CD14-positive monocyte (primary cell): ENCODE measurements at regions of chr2 and their contacts with region 1.

Region 1: GRCh38 chr2:102301867-102302362 is 9.4 kb upstream of the IL1RL1 start:
- DNase-seq: peak in 2 of 3 donors; percentile 66 to 73
- H3K4me3 ChIP-seq: no peak overlapping the region
- H3K4me3 Mint-ChIP-seq: peak overlapping the region in 1 of 2 donors; percentile 85
- H3K27ac ChIP-seq: no peak overlapping the region
- H3K27ac Mint-ChIP-seq: peak overlapping the region in 1 of 7 donors; percentile 0
- H3K4me1 ChIP-seq: peaks cover 3 to 4% of the 10 kb centered on the region in 2 donors
- H3K4me1 Mint-ChIP-seq: peaks cover 15% of the 10 kb centered on the region
- H3K27me3 ChIP-seq: peaks cover 82 to 95% of the 10 kb centered on the region in 2 donors
- H3K27me3 Mint-ChIP-seq: peaks cover 68 to 82% (median 82%) of the 10 kb centered on the region in 3 donors
- CTCF ChIP-seq: peak; percentile 71

Region 2: DNA sequence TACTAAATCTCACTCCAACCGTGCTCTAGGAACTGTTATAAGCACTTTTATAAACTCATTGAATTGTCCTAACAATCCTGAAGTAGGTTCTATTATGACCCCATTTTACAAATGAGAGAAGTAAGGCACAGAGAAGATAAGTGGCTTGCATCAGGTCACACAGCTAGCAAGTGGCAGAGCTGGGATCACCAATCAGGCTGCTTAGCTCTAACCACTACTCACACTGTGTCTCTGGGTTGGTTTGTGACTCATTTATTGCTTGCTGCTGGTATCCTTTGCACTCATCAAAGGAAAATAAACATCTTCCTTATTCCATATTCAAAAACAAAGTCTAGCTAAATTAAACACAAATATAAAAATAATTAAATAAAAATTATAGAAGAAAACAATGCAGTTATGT is 352.6 kb before region 1 on chr2:
- intact Hi-C with region 1: no loop called
- DNase-seq: peak in 2 of 3 donors; percentile 46 to 56
- H3K4me3 ChIP-seq: no peak overlapping the region
- H3K4me3 Mint-ChIP-seq: no peak overlapping the region
- H3K27ac ChIP-seq: no peak overlapping the region
- H3K27ac Mint-ChIP-seq: peak overlapping the region in 2 of 7 donors; percentile 15 to 36
- H3K4me1 ChIP-seq: peaks cover 9 to 19% of the 10 kb centered on the region in 2 donors
- H3K4me1 Mint-ChIP-seq: peaks cover 27% of the 10 kb centered on the region
- H3K27me3 ChIP-seq: no peaks in the 10 kb centered on the region
- H3K27me3 Mint-ChIP-seq: peaks cover 0 to 3% (median under 1%) of the 10 kb centered on the region in 3 donors
- CTCF ChIP-seq: no peak

Region 3: GRCh38 chr2:102226612-102227391 is 75.1 kb before region 1 on chr2:
- intact Hi-C with region 1: no loop called
- DNase-seq: peak in 1 of 3 donors; percentile 52
- H3K4me3 ChIP-seq: no peak overlapping the region
- H3K4me3 Mint-ChIP-seq: no peak overlapping the region
- H3K27ac ChIP-seq: peak overlapping the region; percentile 92 to 94
- H3K27ac Mint-ChIP-seq: peak overlapping the region; percentile 97 to 99 (median 98)
- H3K4me1 ChIP-seq: peaks cover 34 to 35% of the 10 kb centered on the region in 2 donors
- H3K4me1 Mint-ChIP-seq: peaks cover 57% of the 10 kb centered on the region
- H3K27me3 ChIP-seq: no peaks in the 10 kb centered on the region
- H3K27me3 Mint-ChIP-seq: peaks cover 4 to 10% (median 5%) of the 10 kb centered on the region in 3 donors
- CTCF ChIP-seq: no peak

Region 4: DNA sequence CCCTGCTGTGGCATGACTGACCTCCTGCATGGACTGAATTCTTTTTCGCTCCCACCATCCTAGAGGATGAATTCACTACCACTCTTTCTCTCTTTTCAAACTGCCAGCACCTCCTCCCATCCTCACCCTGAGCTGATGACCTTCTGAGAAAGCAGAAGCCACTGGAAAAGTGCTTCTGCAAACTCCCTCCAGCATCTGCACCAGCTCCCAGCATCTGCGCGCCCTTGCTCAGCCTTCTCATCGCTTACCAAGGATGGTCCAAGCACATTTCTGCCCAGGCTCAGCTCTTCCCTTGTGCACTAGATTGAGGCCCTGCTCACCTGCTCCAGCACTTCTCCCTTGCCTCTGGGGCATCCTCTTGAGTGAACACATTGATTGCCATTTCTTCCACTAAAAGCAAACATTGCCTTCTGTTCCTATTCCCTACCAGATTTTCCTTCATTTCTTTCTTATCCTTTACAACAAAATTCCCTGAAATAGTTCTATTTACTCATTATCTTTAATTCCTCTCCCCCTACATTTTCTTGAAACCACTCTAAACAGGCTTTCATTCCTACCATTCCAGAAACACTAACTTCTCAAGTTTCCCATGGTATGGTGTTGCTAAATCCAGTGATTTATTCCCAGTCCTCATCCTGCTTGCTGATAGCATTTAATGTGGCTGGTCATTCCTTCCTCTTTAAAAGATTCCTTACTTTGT is 33.3 kb before region 1 on chr2:
- intact Hi-C with region 1: loop called in 1 of 2 experiments (anchors 5 kb)
- DNase-seq: no peak
- H3K4me3 ChIP-seq: no peak overlapping the region
- H3K4me3 Mint-ChIP-seq: no peak overlapping the region
- H3K27ac ChIP-seq: no peak overlapping the region
- H3K27ac Mint-ChIP-seq: peak overlapping the region in 1 of 7 donors; percentile 58
- H3K4me1 ChIP-seq: peaks cover 8 to 11% of the 10 kb centered on the region in 2 donors
- H3K4me1 Mint-ChIP-seq: peaks cover 3% of the 10 kb centered on the region
- H3K27me3 ChIP-seq: peaks cover 38 to 52% of the 10 kb centered on the region in 2 donors
- H3K27me3 Mint-ChIP-seq: peaks cover 43 to 47% (median 47%) of the 10 kb centered on the region in 3 donors
- CTCF ChIP-seq: no peak